ENCODE measurements at regions of chr9 and their contacts with region 1.

Region 1: DNA sequence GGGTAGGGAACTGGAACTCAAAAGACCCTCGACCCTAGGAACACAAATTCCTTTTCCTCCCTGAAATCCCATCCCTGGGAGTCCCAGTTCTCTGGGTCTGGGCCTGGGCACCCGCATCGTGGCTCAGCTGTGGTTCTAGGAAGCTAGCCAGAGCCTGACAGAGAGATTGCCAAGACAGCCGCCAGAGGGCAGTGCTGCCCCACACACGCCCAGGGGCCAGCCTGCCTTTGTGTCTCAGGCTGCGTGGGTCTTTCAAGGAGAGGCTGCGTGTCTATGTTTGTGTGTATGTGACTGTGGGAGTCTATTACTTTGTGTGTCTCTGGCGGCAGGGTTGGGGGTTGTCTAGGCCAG is 32.0 kb upstream of the TTLL11 start:
- DNase-seq: peak; percentile 85
- ATAC-seq: peak; percentile 82

Region 2: GRCh38 chr9:121670431-121670830 is 454.7 kb before region 1 on chr9:
- intact Hi-C with region 1: no loop called
- DNase-seq: no peak
- ATAC-seq: peak; percentile 32

Region 3: GRCh38 chr9:122099271-122099869 is 25.8 kb before region 1 on chr9:
- intact Hi-C with region 1: loop called (anchors 1 kb)
- DNase-seq: peak; percentile 93
- ATAC-seq: peak; percentile 81

Region 4: GRCh38 chr9:122113574-122113973 is 11.6 kb before region 1 on chr9:
- intact Hi-C with region 1: no loop called
- DNase-seq: no peak
- ATAC-seq: no peak

Region 5: DNA sequence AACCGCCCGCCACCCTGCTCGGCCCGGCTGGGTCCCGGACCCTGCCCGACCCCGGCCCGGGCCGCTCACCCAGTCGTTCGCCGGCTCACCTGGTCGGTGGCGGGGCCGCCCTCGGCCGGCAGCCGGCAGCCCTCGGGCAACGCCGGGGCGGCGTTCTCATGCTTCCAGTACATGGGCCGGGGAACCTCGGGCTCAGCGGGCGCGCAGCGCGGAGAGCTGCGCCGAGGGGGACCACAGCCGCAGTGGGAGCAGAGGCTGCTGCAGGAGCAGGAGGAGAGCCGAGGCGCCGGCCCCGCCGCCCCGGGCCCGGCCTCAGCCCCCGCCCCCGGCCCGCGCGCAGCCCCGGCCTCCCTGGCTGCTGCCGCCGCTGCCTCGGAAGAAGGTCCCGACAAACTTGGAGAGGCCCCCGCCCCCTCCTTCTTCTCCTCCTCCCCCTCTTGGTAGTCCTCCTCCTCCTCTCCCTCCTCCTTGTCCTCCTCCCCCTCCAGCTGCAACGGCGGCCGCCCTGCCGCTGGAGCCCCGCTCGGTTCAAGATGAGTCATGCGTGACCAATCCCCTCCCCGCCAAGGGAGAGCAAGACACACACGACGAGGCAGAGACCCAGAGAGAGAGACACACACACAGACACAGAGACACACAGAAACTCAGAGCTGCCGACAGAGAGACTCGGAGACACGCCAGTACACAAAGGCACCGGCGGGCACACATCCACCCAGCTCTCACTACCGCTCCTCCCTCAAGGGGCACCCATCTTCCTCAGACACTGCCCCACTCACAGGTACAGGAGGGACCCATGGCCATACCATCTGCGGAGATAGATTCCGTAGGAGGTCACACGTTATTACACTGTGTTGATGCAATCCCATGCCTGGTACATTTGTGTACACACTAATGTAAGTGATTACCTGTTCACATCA is 103.7 kb after region 1 on chr9 and contains the start of gene LHX6:
- intact Hi-C with region 1: loop called (anchors 5 kb)
- DNase-seq: no peak
- ATAC-seq: no peak
- total RNA-seq, gene LHX6: 6.1 TPM

Region 6: GRCh38 chr9:122453677-122454135 is 328.6 kb after region 1 on chr9:
- intact Hi-C with region 1: loop called (anchors 10 kb)
- DNase-seq: no peak
- ATAC-seq: no peak